Caco-2 (cell line): ENCODE measurements at regions of chr11 and their contacts with region 1.

Region 1: GRCh38 chr11:99170591-99170990 is 149.8 kb downstream of the CNTN5 start:
- DNase-seq: no peak
- H3K4me3 ChIP-seq: no peak overlapping the region
- H3K4me3 Mint-ChIP-seq: no peak overlapping the region
- H3K27ac Mint-ChIP-seq: no peak overlapping the region
- H3K4me1 ChIP-seq: no peaks in the 10 kb centered on the region
- H3K4me1 Mint-ChIP-seq: no peaks in the 10 kb centered on the region
- H3K27me3 ChIP-seq: no peaks in the 10 kb centered on the region
- H3K27me3 Mint-ChIP-seq: peaks cover 4% of the 10 kb centered on the region
- CTCF ChIP-seq: no peak

Region 2: DNA sequence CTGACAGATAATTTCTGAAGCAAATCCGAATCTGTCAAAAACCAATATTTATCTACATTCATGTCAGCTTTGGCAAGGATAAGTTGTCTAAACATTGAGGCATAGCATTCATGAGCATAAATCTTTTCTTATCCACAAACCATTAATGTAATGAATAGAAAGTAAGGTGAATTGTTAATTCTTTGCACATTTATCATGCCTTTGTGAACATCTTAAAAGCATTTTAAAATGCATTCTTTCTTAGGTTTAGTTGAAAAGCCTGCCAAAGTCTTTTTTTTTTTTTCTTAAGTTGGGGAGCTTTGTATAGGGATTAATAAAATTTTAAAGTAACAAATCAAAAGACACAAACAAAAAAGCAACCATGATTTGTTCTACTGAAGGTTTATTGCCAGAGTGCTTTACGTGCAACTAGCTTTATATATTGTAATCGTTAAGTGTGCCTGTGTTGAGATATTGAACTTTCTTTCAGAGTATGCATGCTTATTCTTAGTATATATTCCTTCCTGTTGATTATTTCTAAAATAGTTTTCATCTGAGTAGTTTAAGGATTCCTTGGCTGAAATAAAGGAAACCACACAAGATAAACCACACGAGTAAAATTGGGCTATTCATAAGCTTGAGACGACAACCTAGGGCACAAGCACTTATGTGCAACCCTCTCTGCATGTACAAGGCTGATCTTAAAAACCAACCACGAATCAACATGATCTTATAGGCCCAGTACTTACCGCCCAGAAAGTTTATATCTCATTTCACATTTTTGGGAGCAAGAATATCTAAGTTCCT is 1260.8 kb before region 1 on chr11:
- CTCF ChIA-PET with region 1: no interaction called
- POLR2A ChIA-PET with region 1: no interaction called
- intact Hi-C with region 1: loop called (anchors 5 kb)
- DNase-seq: no peak
- H3K4me3 ChIP-seq: no peak overlapping the region
- H3K4me3 Mint-ChIP-seq: no peak overlapping the region
- H3K27ac Mint-ChIP-seq: no peak overlapping the region
- H3K4me1 ChIP-seq: no peaks in the 10 kb centered on the region
- H3K4me1 Mint-ChIP-seq: no peaks in the 10 kb centered on the region
- H3K27me3 ChIP-seq: no peaks in the 10 kb centered on the region
- H3K27me3 Mint-ChIP-seq: peaks cover 9% of the 10 kb centered on the region
- CTCF ChIP-seq: no peak

Region 3: GRCh38 chr11:99192716-99193115 is 22.1 kb after region 1 on chr11:
- CTCF ChIA-PET with region 1: no interaction called
- POLR2A ChIA-PET with region 1: no interaction called
- intact Hi-C with region 1: no loop called
- DNase-seq: no peak
- H3K4me3 ChIP-seq: no peak overlapping the region
- H3K4me3 Mint-ChIP-seq: no peak overlapping the region
- H3K27ac Mint-ChIP-seq: no peak overlapping the region
- H3K4me1 ChIP-seq: no peaks in the 10 kb centered on the region
- H3K4me1 Mint-ChIP-seq: no peaks in the 10 kb centered on the region
- H3K27me3 ChIP-seq: no peaks in the 10 kb centered on the region
- H3K27me3 Mint-ChIP-seq: peaks cover 2% of the 10 kb centered on the region
- CTCF ChIP-seq: no peak